ENCODE measurements at regions of chr9 and their contacts with region 1.

Region 1: GRCh38 chr9:92140074-92140753 is 25.0 kb upstream of the SPTLC1 start:
- DNase-seq: peak; percentile 85
- ATAC-seq: peak; percentile 62
- H3K4me3 Mint-ChIP-seq: no peak overlapping the region
- H3K27ac Mint-ChIP-seq: no peak overlapping the region
- H3K4me1 Mint-ChIP-seq: peaks cover 8% of the 10 kb centered on the region
- H3K27me3 Mint-ChIP-seq: peaks cover 30% of the 10 kb centered on the region

Region 2: DNA sequence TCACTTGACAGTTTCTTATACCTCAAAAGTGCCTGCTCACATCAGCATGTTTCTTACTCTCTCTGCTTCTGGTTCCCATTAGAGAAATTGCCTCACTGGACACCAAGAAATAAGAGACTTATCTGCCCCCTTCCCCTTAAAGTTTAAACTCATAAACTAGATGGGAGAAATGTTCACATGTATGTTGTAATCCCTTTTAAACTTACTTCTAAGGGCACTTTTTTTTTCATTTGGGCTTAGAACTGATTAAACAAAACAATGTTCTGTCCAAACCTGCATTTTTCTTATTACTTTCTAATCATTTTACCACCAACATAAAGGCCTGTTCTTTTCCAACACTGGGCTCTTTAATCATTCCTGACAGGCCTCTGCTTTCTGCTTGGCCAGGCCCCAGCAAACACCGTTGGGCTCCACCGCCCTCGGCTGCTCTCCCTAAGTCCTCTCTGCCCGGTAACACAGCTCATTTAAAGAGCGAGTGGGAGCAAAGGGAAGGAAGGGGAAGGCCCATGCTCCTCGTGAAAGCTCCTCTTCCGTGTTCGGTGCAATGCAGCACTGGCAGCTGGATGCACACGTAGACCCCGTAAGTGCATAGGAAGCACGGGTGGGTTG is 243.6 kb before region 1 on chr9:
- CTCF ChIA-PET with region 1: no interaction called
- POLR2A ChIA-PET with region 1: no interaction called
- intact Hi-C with region 1: no loop called
- DNase-seq: no peak
- ATAC-seq: no peak
- H3K4me3 Mint-ChIP-seq: no peak overlapping the region
- H3K27ac Mint-ChIP-seq: no peak overlapping the region
- H3K4me1 Mint-ChIP-seq: no peaks in the 10 kb centered on the region
- H3K27me3 Mint-ChIP-seq: peaks cover 21% of the 10 kb centered on the region

Region 3: DNA sequence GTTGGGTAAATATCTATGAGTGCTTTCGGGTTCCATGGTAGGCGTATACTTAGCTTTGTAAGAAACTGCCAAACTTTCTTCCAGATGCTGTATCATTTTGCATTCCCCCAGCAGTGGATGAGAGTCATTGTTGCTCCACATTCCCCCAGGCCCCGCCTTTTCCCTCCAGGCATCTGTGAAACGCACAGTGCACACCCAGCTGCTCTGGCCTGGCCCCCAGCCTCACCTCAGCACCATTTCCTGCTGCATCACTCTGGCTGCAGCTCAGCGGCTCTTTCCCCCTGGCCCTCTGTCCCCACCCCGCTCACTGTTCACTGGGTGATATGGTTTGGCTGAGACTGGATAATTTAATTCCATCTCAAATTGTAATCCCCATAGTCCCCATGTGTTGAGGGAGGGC is 51.6 kb after region 1 on chr9:
- CTCF ChIA-PET with region 1: interaction called, 4 read pairs
- POLR2A ChIA-PET with region 1: no interaction called
- intact Hi-C with region 1: loop called (anchors 5 kb)
- DNase-seq: no peak
- ATAC-seq: no peak
- H3K4me3 Mint-ChIP-seq: no peak overlapping the region
- H3K27ac Mint-ChIP-seq: no peak overlapping the region
- H3K4me1 Mint-ChIP-seq: no peaks in the 10 kb centered on the region
- H3K27me3 Mint-ChIP-seq: peaks cover 2% of the 10 kb centered on the region

Region 4: DNA sequence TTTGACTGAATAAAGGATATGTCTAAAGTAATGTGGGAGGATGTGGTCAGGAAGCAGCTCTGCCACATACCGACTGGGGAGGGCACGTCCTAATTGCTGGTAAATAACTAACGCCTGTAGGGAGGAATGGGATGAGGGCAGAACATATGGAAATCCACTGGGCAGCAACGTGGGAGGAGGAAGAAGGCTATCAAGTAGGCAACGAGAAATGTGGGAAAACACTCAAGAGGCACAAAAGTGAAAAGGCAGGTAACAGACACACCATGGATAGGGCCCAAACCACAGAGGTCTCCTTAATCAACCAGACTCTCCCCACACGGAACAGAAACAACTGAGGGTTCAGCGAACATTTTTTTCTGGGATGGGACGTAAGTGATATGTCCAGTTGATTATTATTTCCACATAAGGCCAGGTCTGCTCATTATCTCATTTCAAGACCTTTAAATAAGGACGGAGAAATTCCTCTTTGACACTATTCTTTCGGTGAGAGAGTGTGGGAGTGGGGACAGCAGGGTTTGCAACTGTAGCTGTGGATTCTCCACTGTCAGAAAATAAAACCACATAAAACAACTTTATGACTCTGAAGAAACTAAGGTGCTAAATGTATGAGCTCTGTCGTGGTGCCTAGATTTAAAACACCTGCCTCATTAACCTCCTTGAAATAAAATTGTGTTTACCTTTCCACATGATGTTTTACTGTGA is 136.3 kb after region 1 on chr9:
- CTCF ChIA-PET with region 1: interaction called, 11 read pairs
- POLR2A ChIA-PET with region 1: no interaction called
- intact Hi-C with region 1: no loop called
- DNase-seq: no peak
- ATAC-seq: peak; percentile 71
- H3K4me3 Mint-ChIP-seq: no peak overlapping the region
- H3K27ac Mint-ChIP-seq: peak overlapping the region; percentile 56
- H3K4me1 Mint-ChIP-seq: peaks cover 41% of the 10 kb centered on the region
- H3K27me3 Mint-ChIP-seq: no peaks in the 10 kb centered on the region

Region 5: DNA sequence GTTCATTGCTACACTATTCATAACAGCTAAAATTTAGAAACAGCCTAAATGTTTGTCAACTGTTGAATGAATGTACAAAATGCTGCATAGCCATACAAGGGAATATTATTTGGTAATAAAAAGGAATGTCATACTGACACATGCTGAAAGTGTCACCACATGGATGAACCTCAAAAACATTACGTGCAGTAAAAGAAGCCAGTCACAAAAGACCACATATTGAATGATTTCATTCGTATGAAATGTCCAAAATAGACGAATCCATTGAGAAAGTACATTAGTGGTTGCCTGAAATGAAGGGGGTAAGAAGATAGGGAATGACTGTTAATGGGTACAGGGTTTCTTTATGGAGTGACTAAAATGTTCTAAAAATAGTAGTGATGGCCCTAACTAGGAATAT is 407.1 kb after region 1 on chr9:
- CTCF ChIA-PET with region 1: no interaction called
- POLR2A ChIA-PET with region 1: no interaction called
- intact Hi-C with region 1: no loop called
- DNase-seq: no peak
- ATAC-seq: no peak
- H3K4me3 Mint-ChIP-seq: no peak overlapping the region
- H3K27ac Mint-ChIP-seq: no peak overlapping the region
- H3K4me1 Mint-ChIP-seq: no peaks in the 10 kb centered on the region
- H3K27me3 Mint-ChIP-seq: no peaks in the 10 kb centered on the region

Region 6: GRCh38 chr9:92634712-92635605 is 494.7 kb after region 1 on chr9:
- CTCF ChIA-PET with region 1: interaction called, 11 read pairs
- POLR2A ChIA-PET with region 1: no interaction called
- intact Hi-C with region 1: loop called (anchors 1 to 5 kb)
- DNase-seq: peak; percentile 83
- ATAC-seq: peak; percentile 69
- H3K4me3 Mint-ChIP-seq: no peak overlapping the region
- H3K27ac Mint-ChIP-seq: no peak overlapping the region
- H3K4me1 Mint-ChIP-seq: peaks cover 6% of the 10 kb centered on the region
- H3K27me3 Mint-ChIP-seq: no peaks in the 10 kb centered on the region